ENCODE measurements at regions of chr5 and their contacts with region 1.

Region 1: GRCh38 chr5:159156426-159157238 is 52.7 kb downstream of the RNF145 start:
- DNase-seq: peak; percentile 21
- ATAC-seq: peak; percentile 79
- H3K4me3 Mint-ChIP-seq: no peak overlapping the region
- H3K27ac Mint-ChIP-seq: no peak overlapping the region
- H3K4me1 Mint-ChIP-seq: peaks cover 40% of the 10 kb centered on the region
- H3K27me3 Mint-ChIP-seq: no peaks in the 10 kb centered on the region

Region 2: DNA sequence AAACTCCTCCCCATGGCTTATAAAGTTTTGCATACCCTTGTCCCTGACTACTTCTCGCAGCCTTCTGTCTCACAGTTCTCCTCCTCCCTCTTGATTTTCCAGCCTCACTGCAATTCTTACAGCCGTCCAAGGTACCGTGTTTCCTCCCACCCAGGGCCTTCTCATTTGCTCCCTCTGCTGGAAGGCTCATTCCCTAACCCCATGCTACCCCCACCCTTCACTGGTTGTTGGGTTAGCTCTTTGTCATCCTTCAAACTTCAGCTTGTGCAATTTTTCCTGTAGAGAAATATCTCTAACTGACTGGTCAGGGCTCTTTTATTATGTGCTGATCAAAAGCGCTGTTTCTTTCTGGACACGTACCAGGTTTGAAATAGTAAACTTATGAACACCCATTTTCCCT is 386.1 kb before region 1 on chr5:
- CTCF ChIA-PET with region 1: no interaction called
- POLR2A ChIA-PET with region 1: no interaction called
- intact Hi-C with region 1: no loop called
- DNase-seq: no peak
- ATAC-seq: no peak
- H3K4me3 Mint-ChIP-seq: no peak overlapping the region
- H3K27ac Mint-ChIP-seq: no peak overlapping the region
- H3K4me1 Mint-ChIP-seq: peaks cover 4% of the 10 kb centered on the region
- H3K27me3 Mint-ChIP-seq: peaks cover 10% of the 10 kb centered on the region

Region 3: GRCh38 chr5:159184858-159185381 is 28.3 kb after region 1 on chr5:
- CTCF ChIA-PET with region 1: interaction called, 22 read pairs
- POLR2A ChIA-PET with region 1: no interaction called
- intact Hi-C with region 1: no loop called
- DNase-seq: peak; percentile 70
- ATAC-seq: peak; percentile 94
- H3K4me3 Mint-ChIP-seq: peak overlapping the region; percentile 1
- H3K27ac Mint-ChIP-seq: peak overlapping the region; percentile 83
- H3K4me1 Mint-ChIP-seq: peaks cover 74% of the 10 kb centered on the region
- H3K27me3 Mint-ChIP-seq: no peaks in the 10 kb centered on the region

Region 4: DNA sequence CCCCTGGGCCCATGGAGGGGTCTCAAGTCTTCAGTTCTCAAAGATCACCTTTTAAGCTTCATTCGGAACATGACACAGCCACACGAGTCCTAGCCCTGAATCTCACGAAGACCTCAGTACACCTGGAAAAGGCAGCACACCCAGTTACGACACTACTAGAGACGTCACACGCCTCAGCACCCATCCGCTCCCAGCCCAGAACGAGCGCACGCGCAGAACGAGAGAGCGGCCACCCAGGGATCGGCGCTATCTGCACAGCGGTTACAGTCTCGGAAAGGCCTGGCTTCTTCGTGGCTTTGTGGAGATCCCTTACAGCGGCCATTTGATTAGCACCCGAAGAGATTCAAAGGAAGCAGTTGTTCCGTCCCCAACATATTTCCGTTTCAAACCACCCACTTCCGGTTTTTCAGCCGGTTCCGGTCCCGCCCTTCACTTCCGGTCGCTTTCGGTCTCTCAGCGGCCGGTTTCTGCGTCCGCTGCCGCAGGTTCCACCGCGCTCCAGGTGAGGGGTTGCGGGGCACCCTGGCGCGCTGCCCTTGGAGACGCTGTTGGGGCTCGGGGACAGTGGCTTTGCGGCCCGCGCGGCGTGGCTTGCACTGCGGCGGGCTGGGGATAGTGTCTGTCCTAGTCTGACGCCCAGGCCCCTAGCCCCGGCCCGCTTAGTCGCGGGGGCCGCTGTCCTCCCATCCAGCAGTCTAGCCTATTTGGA is 106.4 kb after region 1 on chr5 and contains the start of gene UBLCP1:
- CTCF ChIA-PET with region 1: interaction called, 7 read pairs
- POLR2A ChIA-PET with region 1: no interaction called
- intact Hi-C with region 1: loop called (anchors 1 to 2 kb)
- DNase-seq: peak; percentile 85
- ATAC-seq: peak; percentile 92
- H3K4me3 Mint-ChIP-seq: peak within 1 kb of the TSS; percentile 89
- H3K27ac Mint-ChIP-seq: peak within 1 kb of the TSS; percentile 100
- H3K4me1 Mint-ChIP-seq: peaks cover 49% of the 10 kb centered on the region
- H3K27me3 Mint-ChIP-seq: no peaks in the 10 kb centered on the region
- total RNA-seq, gene UBLCP1: 26.0 to 31.0 TPM

Region 5: GRCh38 chr5:159286420-159287035 is 129.9 kb after region 1 on chr5:
- CTCF ChIA-PET with region 1: interaction called, 19 read pairs
- POLR2A ChIA-PET with region 1: no interaction called
- intact Hi-C with region 1: no loop called
- DNase-seq: no peak
- ATAC-seq: peak; percentile 63
- H3K4me3 Mint-ChIP-seq: no peak overlapping the region
- H3K27ac Mint-ChIP-seq: no peak overlapping the region
- H3K4me1 Mint-ChIP-seq: no peaks in the 10 kb centered on the region
- H3K27me3 Mint-ChIP-seq: no peaks in the 10 kb centered on the region

Region 6: DNA sequence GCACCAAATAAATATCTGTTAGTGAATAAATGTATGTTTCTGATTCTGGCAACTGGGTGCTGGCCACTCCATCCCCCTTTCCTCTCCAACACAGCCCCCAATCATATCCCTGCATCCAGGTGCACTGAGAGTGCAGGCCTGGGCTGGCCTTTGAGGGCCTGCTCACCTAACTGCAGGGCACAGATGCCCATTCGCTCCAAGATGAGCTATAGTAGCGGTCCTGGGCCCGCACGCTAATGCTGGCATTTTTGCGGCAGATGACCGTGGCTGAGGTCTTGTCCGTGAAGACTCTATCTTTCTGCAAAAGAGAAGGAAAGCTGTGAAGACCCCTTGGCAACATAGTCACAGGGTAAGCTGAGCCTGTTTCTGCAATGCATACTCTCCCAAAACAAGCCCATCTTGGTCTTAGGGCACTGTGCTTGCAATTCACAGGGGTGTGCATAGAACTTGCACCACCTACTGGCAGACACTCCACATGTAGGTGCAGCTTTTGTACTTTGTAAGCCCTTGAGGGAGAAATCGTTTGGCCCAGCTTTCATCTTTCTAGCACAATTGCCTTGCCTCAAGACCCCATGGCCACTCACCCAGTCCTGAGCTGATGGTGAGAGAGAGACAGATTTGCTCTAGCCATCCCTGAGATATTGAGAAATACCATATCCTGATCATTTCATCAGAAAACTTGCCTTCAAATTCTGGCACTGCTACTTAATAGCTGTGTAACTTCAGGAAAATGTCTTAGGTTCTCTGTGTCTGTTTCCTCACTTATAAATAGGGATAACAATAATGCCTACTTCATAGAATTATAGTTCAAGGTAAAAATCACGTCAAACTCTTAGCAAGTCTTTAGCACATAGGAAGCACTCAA is 160.1 kb after region 1 on chr5:
- CTCF ChIA-PET with region 1: interaction called, 73 read pairs
- POLR2A ChIA-PET with region 1: interaction called, 4 read pairs
- intact Hi-C with region 1: loop called (anchors 1 kb)
- DNase-seq: peak; percentile 65
- ATAC-seq: peak; percentile 81
- H3K4me3 Mint-ChIP-seq: no peak overlapping the region
- H3K27ac Mint-ChIP-seq: no peak overlapping the region
- H3K4me1 Mint-ChIP-seq: no peaks in the 10 kb centered on the region
- H3K27me3 Mint-ChIP-seq: peaks cover 2% of the 10 kb centered on the region

Region 7: DNA sequence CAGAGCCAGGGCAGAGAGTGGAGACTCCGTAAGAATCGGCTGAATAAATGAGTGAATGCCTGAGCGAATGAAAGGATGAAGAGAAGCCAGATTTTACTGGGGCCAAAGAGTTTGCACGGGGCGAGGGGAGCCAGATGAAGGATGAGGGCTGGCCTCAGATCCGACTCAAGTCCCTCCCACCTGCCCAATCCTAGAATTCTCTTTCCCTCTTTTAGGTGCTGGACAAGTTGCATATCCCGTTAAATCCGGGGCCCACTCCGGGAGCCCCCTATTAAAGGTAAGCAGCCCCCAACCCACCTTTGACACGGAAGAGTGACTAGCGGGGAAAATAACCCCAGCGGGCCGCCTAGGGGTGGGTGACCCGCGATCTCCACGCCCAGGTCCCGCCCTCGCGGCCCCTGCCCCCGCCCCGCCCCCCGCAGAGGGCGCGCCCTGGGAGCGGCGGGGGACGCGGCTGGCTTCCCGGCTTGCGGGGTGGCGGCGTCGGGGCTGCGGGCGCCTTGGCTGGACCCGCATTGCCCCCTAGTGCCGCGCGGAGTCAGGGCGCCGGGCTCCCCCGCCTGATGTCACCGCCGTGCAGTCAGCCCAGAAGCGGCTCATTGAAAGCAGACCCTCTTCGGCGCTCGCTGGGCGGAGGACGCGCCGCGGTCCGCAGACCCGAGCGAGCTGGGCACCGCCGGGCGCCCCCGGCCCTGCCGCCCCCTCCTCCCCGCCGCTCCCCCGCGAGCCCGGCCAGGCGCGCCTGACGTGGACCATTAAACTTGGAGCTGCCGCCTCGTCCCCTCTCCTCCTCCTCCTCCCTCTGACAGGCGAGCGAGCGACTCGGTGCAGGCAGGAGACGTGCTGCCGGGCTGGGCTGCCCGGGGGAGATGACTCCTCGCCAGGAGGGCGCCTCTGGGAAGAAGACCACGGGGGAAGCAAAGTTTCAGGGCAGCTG is 759.5 kb after region 1 on chr5 and contains the start of gene ADRA1B:
- CTCF ChIA-PET with region 1: no interaction called
- POLR2A ChIA-PET with region 1: no interaction called
- intact Hi-C with region 1: loop called in 1 of 2 experiments (anchors 5 kb)
- DNase-seq: peak; percentile 76
- ATAC-seq: peak; percentile 96
- H3K4me3 Mint-ChIP-seq: peak within 1 kb of the TSS; percentile 5
- H3K27ac Mint-ChIP-seq: no peak within 1 kb of the TSS
- H3K4me1 Mint-ChIP-seq: peaks cover 6% of the 10 kb centered on the region
- H3K27me3 Mint-ChIP-seq: peaks cover 46% of the 10 kb centered on the region
- total RNA-seq, gene ADRA1B: not detected

Measured in activated CD4-positive, alpha-beta T cell treated with anti-CD3 and anti-CD28 coated beads for 36 hours (primary cell).